ENCODE measurements at regions of chr2 and their contacts with region 1.

Region 1: DNA sequence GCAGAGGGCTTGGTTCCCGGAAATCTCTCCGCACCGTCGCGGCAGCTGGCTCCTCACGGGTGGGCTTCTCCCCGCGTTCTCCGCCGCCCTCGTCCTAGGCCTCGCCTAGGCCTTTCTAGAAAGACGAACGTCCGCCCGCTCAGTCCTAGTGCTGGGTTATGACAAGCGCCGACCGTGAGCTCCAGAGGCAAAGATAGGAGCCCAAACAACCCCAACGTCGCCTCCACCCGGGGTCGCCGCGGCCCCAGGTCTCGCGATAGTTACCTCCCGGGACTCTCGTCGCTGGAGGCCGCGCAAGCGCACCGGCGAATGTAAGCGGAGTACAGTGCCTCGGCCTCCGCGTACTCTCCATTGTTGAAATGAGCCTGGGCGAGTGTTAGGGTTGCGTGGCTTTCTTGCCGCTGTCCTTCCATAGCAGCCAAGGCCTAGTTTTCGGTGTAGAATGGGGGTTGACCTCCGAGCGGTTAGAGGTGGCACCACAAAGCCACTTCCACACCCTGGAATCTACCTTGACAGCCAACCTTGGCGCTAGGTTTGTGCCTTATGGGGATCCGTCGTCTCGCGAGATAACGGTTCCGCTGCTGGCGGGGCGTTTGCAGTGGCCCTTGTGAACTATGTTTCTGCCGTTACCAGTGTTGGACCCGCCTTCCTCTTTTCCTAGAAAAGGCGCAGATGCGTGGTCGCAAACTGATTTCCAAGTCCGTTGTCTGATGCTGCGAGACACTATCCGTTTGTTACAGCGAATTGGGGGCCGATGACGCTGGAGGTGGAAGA is at the start of gene TTC32:
- H3K4me3 Mint-ChIP-seq: peak within 1 kb of the TSS; percentile 90
- H3K27ac Mint-ChIP-seq: peak within 1 kb of the TSS; percentile 98
- H3K4me1 Mint-ChIP-seq: peaks cover 32% of the 10 kb centered on the region
- H3K27me3 Mint-ChIP-seq: peaks cover 6% of the 10 kb centered on the region

Region 2: DNA sequence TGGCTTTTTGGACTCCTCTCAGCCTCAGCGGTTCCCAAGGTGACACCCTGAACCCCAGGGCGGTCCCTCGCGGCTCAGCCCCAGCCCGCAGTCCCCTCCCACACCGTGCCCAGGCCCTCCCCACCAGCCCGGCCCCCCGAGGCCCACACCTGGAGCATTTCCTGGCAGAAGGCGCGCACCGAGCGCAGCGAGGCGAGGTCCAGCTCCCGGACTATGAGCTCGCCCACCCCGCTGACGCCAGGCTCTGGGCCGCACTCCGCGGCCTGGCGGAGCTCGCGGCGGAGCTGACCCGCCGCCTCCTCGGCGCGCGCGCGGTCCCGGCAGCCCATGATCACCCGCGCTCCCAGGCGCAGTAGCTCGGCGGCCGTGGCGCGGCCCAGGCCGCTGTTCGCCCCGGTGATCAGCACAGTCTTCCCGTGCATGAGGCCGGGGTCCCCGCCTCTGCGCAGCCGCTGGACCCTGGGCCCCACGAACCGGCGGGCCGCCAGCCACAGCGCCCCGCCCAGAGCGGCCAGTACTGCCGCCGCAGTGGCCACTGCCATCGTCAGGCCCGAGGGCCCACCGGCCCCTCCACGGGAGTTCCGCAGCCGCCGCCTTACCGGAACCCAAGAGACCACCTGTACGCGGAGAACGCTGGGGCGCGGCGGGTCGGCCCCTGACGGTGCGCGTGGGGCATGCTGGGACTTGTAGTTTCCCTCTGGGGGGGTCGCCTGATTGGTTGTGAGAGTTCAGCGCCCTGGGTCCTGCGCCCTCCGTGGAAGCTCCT is 1341.4 kb before region 1 on chr2 and contains the start of gene RDH14:
- intact Hi-C with region 1: loop called (anchors 1 kb)
- H3K4me3 Mint-ChIP-seq: peak within 1 kb of the TSS; percentile 85
- H3K27ac Mint-ChIP-seq: peak within 1 kb of the TSS; percentile 88
- H3K4me1 Mint-ChIP-seq: peaks cover 17% of the 10 kb centered on the region
- H3K27me3 Mint-ChIP-seq: no peaks in the 10 kb centered on the region

Region 3: GRCh38 chr2:19347619-19348562 is 553.7 kb before region 1 on chr2:
- intact Hi-C with region 1: loop called (anchors 5 kb)
- H3K4me3 Mint-ChIP-seq: peak overlapping the region; percentile 97
- H3K27ac Mint-ChIP-seq: peak overlapping the region; percentile 100
- H3K4me1 Mint-ChIP-seq: peaks cover 31% of the 10 kb centered on the region
- H3K27me3 Mint-ChIP-seq: peaks cover 45% of the 10 kb centered on the region

Region 4: DNA sequence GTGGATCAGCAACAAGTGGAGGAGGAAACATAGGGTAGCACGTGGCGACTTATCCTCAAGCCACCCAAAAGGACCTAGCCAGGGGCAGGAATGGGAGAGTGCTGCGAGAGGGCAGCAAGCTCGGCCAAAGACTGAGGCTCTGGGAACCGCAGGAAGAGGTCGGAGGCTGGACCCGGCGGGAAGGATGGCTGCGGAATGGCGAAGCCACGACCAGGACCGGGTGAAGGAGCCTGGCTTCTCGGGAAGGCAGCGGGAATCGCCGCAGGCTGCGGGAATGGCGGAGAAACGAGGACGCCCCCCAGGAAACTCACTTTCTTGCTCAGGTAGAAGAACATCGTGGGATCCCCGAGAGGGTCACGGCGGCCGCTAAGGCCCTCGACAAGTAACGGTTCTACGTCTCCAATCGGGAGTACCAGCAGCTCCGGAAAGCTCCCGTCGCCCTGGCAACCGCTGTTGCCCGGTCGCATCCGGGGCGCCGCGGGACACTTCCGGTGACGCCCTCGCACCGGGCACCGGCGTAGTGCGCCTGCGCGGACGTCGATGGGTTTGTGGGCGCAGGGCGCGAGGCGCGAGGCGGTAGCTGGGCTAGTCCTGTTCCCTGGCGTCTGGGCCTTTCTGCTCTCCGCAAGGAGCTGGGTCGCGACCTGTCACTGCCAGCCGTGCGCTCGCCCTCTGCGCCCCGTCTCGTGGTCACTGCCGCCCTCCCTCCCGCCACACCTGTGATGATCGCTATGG is 88.2 kb after region 1 on chr2 and contains the start of gene WDR35:
- intact Hi-C with region 1: loop called (anchors 5 kb)
- H3K4me3 Mint-ChIP-seq: peak within 1 kb of the TSS; percentile 90
- H3K27ac Mint-ChIP-seq: peak within 1 kb of the TSS; percentile 78
- H3K4me1 Mint-ChIP-seq: peaks cover 17% of the 10 kb centered on the region
- H3K27me3 Mint-ChIP-seq: peaks cover 24% of the 10 kb centered on the region

Region 5: GRCh38 chr2:20051532-20052228 is 150.1 kb after region 1 on chr2 and contains the start of gene LAPTM4A:
- intact Hi-C with region 1: loop called (anchors 2 kb)
- H3K4me3 Mint-ChIP-seq: no peak within 1 kb of the TSS
- H3K27ac Mint-ChIP-seq: no peak within 1 kb of the TSS
- H3K4me1 Mint-ChIP-seq: peaks cover 26% of the 10 kb centered on the region
- H3K27me3 Mint-ChIP-seq: peaks cover 19% of the 10 kb centered on the region

Region 6: GRCh38 chr2:20822535-20823490 is 921.2 kb after region 1 on chr2 and contains the start of gene LDAH:
- intact Hi-C with region 1: loop called (anchors 5 kb)
- H3K4me3 Mint-ChIP-seq: peak within 1 kb of the TSS; percentile 95
- H3K27ac Mint-ChIP-seq: peak within 1 kb of the TSS; percentile 99
- H3K4me1 Mint-ChIP-seq: peaks cover 12% of the 10 kb centered on the region
- H3K27me3 Mint-ChIP-seq: peaks cover 13% of the 10 kb centered on the region